Esophagus squamous epithelium (tissue), 5 donors: ENCODE measurements at regions of chr9 and their contacts with region 1.

Region 1: GRCh38 chr9:136283291-136284235 is 20.3 kb downstream of the CCDC187 start:
- DNase-seq: no peak
- H3K4me3 ChIP-seq: peak overlapping the region in 3 of 4 donors; percentile 16 to 39 (median 34)
- H3K27ac ChIP-seq: no peak overlapping the region
- H3K4me1 ChIP-seq: peaks cover 6 to 8% (median 6%) of the 10 kb centered on the region in 3 donors
- H3K27me3 ChIP-seq: peaks cover 0 to 95% (median 0%) of the 10 kb centered on the region in 4 donors
- CTCF ChIP-seq: peak; percentile 74 to 85 (median 80)
- POLR2A ChIP-seq: no peak

Region 2: GRCh38 chr9:135971892-135972291 is 311.7 kb before region 1 on chr9:
- intact Hi-C with region 1: loop called (anchors 10 kb)
- DNase-seq: no peak
- H3K4me3 ChIP-seq: no peak overlapping the region
- H3K27ac ChIP-seq: no peak overlapping the region
- H3K4me1 ChIP-seq: peaks cover 0 to 28% (median 13%) of the 10 kb centered on the region in 3 donors
- H3K27me3 ChIP-seq: peaks cover 0 to 15% (median 0%) of the 10 kb centered on the region in 4 donors
- CTCF ChIP-seq: no peak
- POLR2A ChIP-seq: no peak

Region 3: GRCh38 chr9:136143216-136144001 is 140.2 kb before region 1 on chr9:
- intact Hi-C with region 1: loop called (anchors 10 kb)
- DNase-seq: no peak
- H3K4me3 ChIP-seq: no peak overlapping the region
- H3K27ac ChIP-seq: no peak overlapping the region
- H3K4me1 ChIP-seq: peaks cover 0 to 18% (median 0%) of the 10 kb centered on the region in 3 donors
- H3K27me3 ChIP-seq: peaks cover 0 to 91% (median 3%) of the 10 kb centered on the region in 4 donors
- CTCF ChIP-seq: peak in 2 of 6 experiments; percentile 12 to 25
- POLR2A ChIP-seq: no peak

Region 4: GRCh38 chr9:136386018-136386417 is 102.5 kb after region 1 on chr9:
- intact Hi-C with region 1: no loop called
- DNase-seq: no peak
- H3K4me3 ChIP-seq: no peak overlapping the region
- H3K27ac ChIP-seq: no peak overlapping the region
- H3K4me1 ChIP-seq: no peaks in the 10 kb centered on the region
- H3K27me3 ChIP-seq: no peaks in the 10 kb centered on the region
- CTCF ChIP-seq: no peak
- POLR2A ChIP-seq: no peak